Natural killer cell (primary cell): ENCODE measurements at regions of chr5 and their contacts with region 1.

Region 1: DNA sequence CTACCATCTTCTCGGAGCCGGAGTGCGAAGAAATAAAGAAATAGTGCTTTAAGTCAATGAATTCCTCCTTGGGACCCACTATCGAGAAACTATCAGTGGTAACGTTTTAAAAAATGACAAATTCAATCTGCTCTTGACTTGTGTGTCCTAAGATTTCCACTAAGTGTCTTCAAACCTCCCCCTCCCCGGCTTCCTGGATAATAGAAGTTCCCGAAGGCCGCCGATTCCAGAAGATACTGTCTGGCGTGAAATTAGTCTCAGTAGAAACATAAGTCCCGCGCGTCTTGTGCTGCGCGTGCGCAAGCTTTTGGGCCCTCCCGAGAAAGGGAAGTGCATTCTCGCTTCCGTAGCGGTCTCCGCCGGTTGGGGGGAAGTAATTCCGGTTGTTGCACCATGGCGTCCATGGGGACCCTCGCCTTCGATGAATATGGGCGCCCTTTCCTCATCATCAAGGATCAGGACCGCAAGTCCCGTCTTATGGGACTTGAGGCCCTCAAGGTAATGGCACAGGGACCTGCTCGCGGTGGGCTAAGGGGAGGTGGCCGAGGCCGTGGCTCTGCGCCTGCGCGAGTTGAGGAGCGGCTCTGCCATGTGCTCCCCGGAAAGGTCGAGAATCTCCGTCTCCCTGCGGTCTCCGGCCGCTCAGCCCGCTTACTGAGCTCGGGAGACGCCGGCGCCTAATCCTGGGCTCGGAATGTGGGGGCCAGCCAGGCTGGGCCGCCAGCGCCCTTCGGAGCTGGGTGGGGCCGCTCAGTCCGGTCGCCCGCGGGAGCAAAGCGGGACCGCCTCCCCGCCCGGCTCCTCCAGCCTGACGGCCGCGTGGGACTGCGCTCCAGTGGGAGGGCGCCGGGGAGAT is at the start of gene CCT5:
- DNase-seq: peak; percentile 88 to 98
- ATAC-seq: peak; percentile 85 to 93 (median 85)
- H3K4me3 ChIP-seq: peak within 1 kb of the TSS; percentile 90
- H3K4me3 Mint-ChIP-seq: peak within 1 kb of the TSS; percentile 97
- H3K27ac ChIP-seq: peak within 1 kb of the TSS; percentile 95
- H3K27ac Mint-ChIP-seq: peak within 1 kb of the TSS; percentile 99
- H3K4me1 ChIP-seq: peaks cover 24% of the 10 kb centered on the region
- H3K4me1 Mint-ChIP-seq: peaks cover 45 to 53% of the 10 kb centered on the region in 2 donors
- H3K27me3 ChIP-seq: no peaks in the 10 kb centered on the region
- H3K27me3 Mint-ChIP-seq: no peaks in the 10 kb centered on the region
- CTCF ChIP-seq: no peak
- total RNA-seq, gene CCT5: 62.2 to 88.0 (median 73.5) TPM

Region 2: DNA sequence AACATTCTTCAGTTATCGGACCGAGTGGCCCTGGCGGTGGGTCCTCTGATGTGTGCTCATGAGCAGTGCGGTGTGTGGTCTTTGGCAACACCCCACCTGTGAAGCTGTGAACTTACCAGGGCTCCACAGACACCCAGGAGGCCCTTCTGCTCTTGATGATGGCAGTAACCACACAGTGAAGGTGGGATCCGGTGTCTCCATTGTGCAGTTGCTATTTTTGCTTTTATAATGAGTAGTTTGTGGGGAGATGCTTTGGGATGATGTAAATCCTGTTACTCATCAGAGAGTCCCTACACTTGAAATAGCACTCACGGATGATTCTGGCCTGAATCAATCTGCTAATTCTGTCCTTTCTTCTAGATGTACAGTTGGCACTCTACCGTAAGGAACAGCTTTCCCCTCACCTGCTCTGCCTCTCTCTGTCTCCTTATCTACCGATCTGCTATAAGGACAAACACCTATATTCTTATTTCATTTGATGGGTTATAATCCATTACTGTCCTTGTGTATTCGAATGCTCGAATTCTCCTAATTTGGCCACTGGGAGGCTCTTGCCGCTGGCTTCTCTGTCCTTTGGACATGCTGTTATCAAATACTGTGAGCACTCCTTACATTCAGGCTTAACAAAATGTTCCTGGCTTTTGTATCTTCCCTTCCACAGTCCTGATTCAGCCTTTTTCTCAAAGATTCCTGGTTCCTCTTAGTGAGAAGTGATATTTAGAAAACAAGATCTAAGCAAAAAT is 20.7 kb before region 1 on chr5:
- intact Hi-C with region 1: no loop called
- DNase-seq: no peak
- ATAC-seq: no peak
- H3K4me3 ChIP-seq: no peak overlapping the region
- H3K4me3 Mint-ChIP-seq: no peak overlapping the region
- H3K27ac ChIP-seq: no peak overlapping the region
- H3K27ac Mint-ChIP-seq: no peak overlapping the region
- H3K4me1 ChIP-seq: no peaks in the 10 kb centered on the region
- H3K4me1 Mint-ChIP-seq: no peaks in the 10 kb centered on the region
- H3K27me3 ChIP-seq: no peaks in the 10 kb centered on the region
- H3K27me3 Mint-ChIP-seq: no peaks in the 10 kb centered on the region
- CTCF ChIP-seq: no peak

Region 3: DNA sequence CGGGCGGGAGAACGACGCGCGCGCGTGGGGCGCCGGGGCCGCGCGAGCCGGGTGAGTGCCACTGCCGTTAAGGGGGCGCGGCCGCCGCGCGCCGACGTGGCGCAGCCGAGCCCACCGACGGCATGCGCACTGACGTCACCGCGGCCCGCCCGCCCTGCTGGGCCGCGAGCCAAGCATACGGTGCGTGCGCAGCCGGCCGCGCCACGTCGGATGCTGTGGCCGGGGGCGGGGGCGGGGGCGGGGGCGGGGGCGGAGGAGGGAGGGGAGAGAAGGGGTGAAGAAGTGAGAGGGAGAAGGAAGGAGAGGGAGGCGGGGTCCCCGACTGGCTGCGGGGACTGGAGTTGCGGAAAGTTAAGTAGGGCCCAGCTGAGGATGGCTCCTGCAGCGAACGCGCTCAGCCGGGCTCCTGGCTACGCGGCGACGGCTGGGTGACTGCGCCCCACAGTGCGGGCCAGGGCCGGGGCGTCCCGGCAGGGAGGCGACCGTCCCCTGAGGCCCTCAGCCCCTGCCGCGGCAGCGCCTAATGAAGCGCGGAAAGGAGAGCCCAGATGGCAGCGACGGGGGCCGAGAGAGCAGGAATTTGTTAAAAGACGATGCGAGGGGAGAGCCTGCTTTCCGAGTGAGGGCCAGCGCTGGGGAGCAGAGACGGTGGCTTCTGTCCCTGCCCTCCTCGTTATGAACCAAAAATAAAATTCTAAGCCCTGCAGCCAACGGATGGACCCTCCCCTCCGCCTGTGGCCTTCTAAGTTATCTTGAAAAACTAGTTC is 511.2 kb after region 1 on chr5 and contains the start of gene DAP:
- intact Hi-C with region 1: loop called (anchors 10 kb)
- DNase-seq: peak; percentile 93 to 98
- ATAC-seq: peak; percentile 85 to 94 (median 88)
- H3K4me3 ChIP-seq: peak within 1 kb of the TSS; percentile 67
- H3K4me3 Mint-ChIP-seq: peak within 1 kb of the TSS; percentile 94
- H3K27ac ChIP-seq: peak within 1 kb of the TSS; percentile 94
- H3K27ac Mint-ChIP-seq: peak within 1 kb of the TSS; percentile 74 to 88
- H3K4me1 ChIP-seq: peaks cover 33% of the 10 kb centered on the region
- H3K4me1 Mint-ChIP-seq: peaks cover 40 to 53% of the 10 kb centered on the region in 2 donors
- H3K27me3 ChIP-seq: no peaks in the 10 kb centered on the region
- H3K27me3 Mint-ChIP-seq: peaks cover 11 to 18% of the 10 kb centered on the region in 2 donors
- CTCF ChIP-seq: no peak
- total RNA-seq, gene DAP: 38.4 to 48.9 (median 44.9) TPM